ENCODE measurements at regions of chr22 and their contacts with region 1.

Region 1: GRCh38 chr22:20159076-20159475 is 8.2 kb upstream of the CCDC188 start:
- DNase-seq: no peak
- ATAC-seq: no peak
- H3K4me3 ChIP-seq: no peak overlapping the region
- H3K27ac ChIP-seq: no peak overlapping the region
- H3K4me1 ChIP-seq: peaks cover 7% of the 10 kb centered on the region
- H3K27me3 ChIP-seq: no peaks in the 10 kb centered on the region
- CTCF ChIP-seq: no peak
- POLR2A ChIP-seq: no peak

Region 2: GRCh38 chr22:19891317-19892256 is 267.5 kb before region 1 on chr22:
- intact Hi-C with region 1: no loop called
- DNase-seq: peak in 1 of 4 donors; percentile 25
- ATAC-seq: no peak
- H3K4me3 ChIP-seq: no peak overlapping the region
- H3K27ac ChIP-seq: peak overlapping the region in 1 of 4 donors; percentile 29
- H3K4me1 ChIP-seq: no peaks in the 10 kb centered on the region
- H3K27me3 ChIP-seq: no peaks in the 10 kb centered on the region
- CTCF ChIP-seq: no peak
- POLR2A ChIP-seq: no peak

Region 3: GRCh38 chr22:19930551-19931486 is 228.3 kb before region 1 on chr22:
- intact Hi-C with region 1: no loop called
- DNase-seq: no peak
- ATAC-seq: no peak
- H3K4me3 ChIP-seq: no peak overlapping the region
- H3K27ac ChIP-seq: no peak overlapping the region
- H3K4me1 ChIP-seq: no peaks in the 10 kb centered on the region
- H3K27me3 ChIP-seq: no peaks in the 10 kb centered on the region
- CTCF ChIP-seq: no peak
- POLR2A ChIP-seq: no peak

Region 4: GRCh38 chr22:20283674-20284066 is 124.6 kb after region 1 on chr22:
- intact Hi-C with region 1: loop called (anchors 2 kb)
- DNase-seq: no peak
- ATAC-seq: no peak
- H3K4me3 ChIP-seq: no peak overlapping the region
- H3K27ac ChIP-seq: no peak overlapping the region
- H3K4me1 ChIP-seq: no peaks in the 10 kb centered on the region
- H3K27me3 ChIP-seq: no peaks in the 10 kb centered on the region
- CTCF ChIP-seq: no peak
- POLR2A ChIP-seq: no peak